HepG2 (cell line): ENCODE measurements at regions of chr7 and their contacts with region 1.

Region 1: GRCh38 chr7:133344275-133344674 is 91.4 kb downstream of the EXOC4 start:
- DNase-seq: no peak
- ATAC-seq: no peak
- H3K4me3 ChIP-seq: no peak overlapping the region
- H3K27ac ChIP-seq: no peak overlapping the region
- H3K4me1 ChIP-seq: no peaks in the 10 kb centered on the region
- H3K27me3 ChIP-seq: no peaks in the 10 kb centered on the region
- CTCF ChIP-seq: peak; percentile 28
- EP300 ChIP-seq: no peak
- POLR2A ChIP-seq: no peak
- RAD21 ChIP-seq: no peak

Region 2: DNA sequence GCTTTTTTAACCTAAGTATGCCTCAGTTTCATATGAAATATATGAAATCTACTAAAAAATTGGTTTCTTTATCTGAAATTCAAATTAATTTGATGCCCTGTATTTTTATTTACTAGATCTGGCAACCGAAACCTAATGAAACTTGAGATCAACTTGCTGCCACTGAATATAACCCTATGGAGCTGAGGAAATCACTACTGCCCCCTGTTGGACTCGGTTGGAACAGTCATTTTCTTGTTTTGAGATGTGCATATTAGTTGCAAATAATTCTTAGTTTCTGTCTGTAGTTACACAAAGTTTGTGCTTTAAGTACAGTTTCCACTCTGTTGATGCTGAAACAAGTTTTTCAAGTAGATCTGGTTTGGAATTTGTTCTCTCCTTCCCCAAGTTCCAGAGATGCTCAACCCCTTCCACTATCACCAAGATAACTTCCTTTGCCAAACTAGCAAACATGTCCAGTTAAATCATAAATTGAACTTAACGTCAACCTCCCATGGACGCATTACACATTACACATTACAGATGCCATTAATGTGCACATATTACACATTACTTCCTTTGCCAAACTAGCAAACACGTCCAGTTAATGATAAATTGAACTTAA is 113.6 kb before region 1 on chr7:
- CTCF ChIA-PET with region 1: no interaction called
- POLR2A ChIA-PET with region 1: no interaction called
- in situ Hi-C with region 1: no loop called
- intact Hi-C with region 1: loop called (anchors 10 kb)
- DNase-seq: peak; percentile 36
- ATAC-seq: peak; percentile 47; the same call in 1 of the 3 replicates
- H3K4me3 ChIP-seq: no peak overlapping the region
- H3K27ac ChIP-seq: no peak overlapping the region
- H3K4me1 ChIP-seq: no peaks in the 10 kb centered on the region
- H3K27me3 ChIP-seq: no peaks in the 10 kb centered on the region
- CTCF ChIP-seq: peak; percentile 56
- EP300 ChIP-seq: no peak
- POLR2A ChIP-seq: no peak
- RAD21 ChIP-seq: no peak

Region 3: GRCh38 chr7:133535308-133535707 is 191.0 kb after region 1 on chr7:
- CTCF ChIA-PET with region 1: no interaction called
- POLR2A ChIA-PET with region 1: no interaction called
- in situ Hi-C with region 1: no loop called
- intact Hi-C with region 1: no loop called
- DNase-seq: no peak
- ATAC-seq: no peak
- H3K4me3 ChIP-seq: no peak overlapping the region
- H3K27ac ChIP-seq: no peak overlapping the region
- H3K4me1 ChIP-seq: no peaks in the 10 kb centered on the region
- H3K27me3 ChIP-seq: no peaks in the 10 kb centered on the region
- CTCF ChIP-seq: no peak
- EP300 ChIP-seq: no peak
- POLR2A ChIP-seq: no peak
- RAD21 ChIP-seq: no peak